CD4-positive, alpha-beta memory T cell (primary cell): ENCODE measurements at regions of chr1 and their contacts with region 1.

Region 1: GRCh38 chr1:9494929-9495758 is 44.1 kb upstream of the SLC25A33 start:
- DNase-seq: peak in 4 of 5 donors; percentile 55 to 62 (median 59)
- H3K4me3 ChIP-seq: peak overlapping the region in 1 of 2 donors; percentile 24
- H3K4me3 Mint-ChIP-seq: peak overlapping the region; percentile 63 to 79 (median 72)
- H3K27ac ChIP-seq: no peak overlapping the region
- H3K27ac Mint-ChIP-seq: no peak overlapping the region
- H3K4me1 ChIP-seq: peaks cover 10% of the 10 kb centered on the region
- H3K4me1 Mint-ChIP-seq: peaks cover 5 to 6% (median 6%) of the 10 kb centered on the region in 4 donors
- H3K27me3 ChIP-seq: no peaks in the 10 kb centered on the region
- H3K27me3 Mint-ChIP-seq: peaks cover 6 to 9% of the 10 kb centered on the region in 2 donors

Region 2: GRCh38 chr1:9110669-9111356 is 384.3 kb before region 1 on chr1:
- CTCF ChIA-PET with region 1: interaction called, 10 read pairs
- POLR2A ChIA-PET with region 1: no interaction called
- intact Hi-C with region 1: no loop called
- DNase-seq: peak; percentile 71 to 77 (median 74)
- H3K4me3 ChIP-seq: no peak overlapping the region
- H3K4me3 Mint-ChIP-seq: no peak overlapping the region
- H3K27ac ChIP-seq: no peak overlapping the region
- H3K27ac Mint-ChIP-seq: no peak overlapping the region
- H3K4me1 ChIP-seq: no peaks in the 10 kb centered on the region
- H3K4me1 Mint-ChIP-seq: peaks cover 0 to 4% (median 0%) of the 10 kb centered on the region in 4 donors
- H3K27me3 ChIP-seq: no peaks in the 10 kb centered on the region
- H3K27me3 Mint-ChIP-seq: no peaks in the 10 kb centered on the region

Region 3: GRCh38 chr1:9181176-9181906 is 313.8 kb before region 1 on chr1:
- CTCF ChIA-PET with region 1: interaction called, 20 read pairs
- POLR2A ChIA-PET with region 1: no interaction called
- intact Hi-C with region 1: no loop called
- DNase-seq: peak; percentile 50 to 65 (median 57)
- H3K4me3 ChIP-seq: peak overlapping the region in 1 of 2 donors; percentile 47
- H3K4me3 Mint-ChIP-seq: peak overlapping the region; percentile 66 to 86 (median 80)
- H3K27ac ChIP-seq: no peak overlapping the region
- H3K27ac Mint-ChIP-seq: no peak overlapping the region
- H3K4me1 ChIP-seq: peaks cover 13% of the 10 kb centered on the region
- H3K4me1 Mint-ChIP-seq: peaks cover 3 to 9% (median 8%) of the 10 kb centered on the region in 4 donors
- H3K27me3 ChIP-seq: peaks cover 17% of the 10 kb centered on the region
- H3K27me3 Mint-ChIP-seq: peaks cover 13 to 15% of the 10 kb centered on the region in 2 donors

Region 4: DNA sequence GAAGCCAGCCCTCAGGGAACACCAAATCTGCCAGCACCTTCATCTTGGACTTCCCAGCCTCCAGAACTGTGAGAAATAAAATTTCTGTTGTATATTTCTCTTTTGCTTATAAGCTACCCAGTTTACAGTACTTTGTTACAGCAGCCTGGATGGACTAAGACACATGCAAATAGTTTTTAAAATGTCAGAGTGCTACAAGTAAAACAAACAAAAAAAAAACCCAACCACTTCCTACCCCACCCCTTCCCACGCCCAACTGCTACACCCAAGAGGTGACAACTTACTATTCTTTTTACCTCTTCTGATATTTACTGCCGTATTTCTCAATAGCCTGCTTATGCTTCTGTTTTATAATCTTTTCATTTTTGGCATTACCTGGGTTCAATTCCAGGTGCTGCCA is 211.1 kb before region 1 on chr1:
- CTCF ChIA-PET with region 1: interaction called, 82 read pairs
- POLR2A ChIA-PET with region 1: interaction called, 3 read pairs
- intact Hi-C with region 1: loop called (anchors 1 kb)
- DNase-seq: peak in 3 of 5 donors; percentile 33 to 61 (median 39)
- H3K4me3 ChIP-seq: peak overlapping the region in 1 of 2 donors; percentile 5
- H3K4me3 Mint-ChIP-seq: peak overlapping the region in 7 of 8 donors; percentile 39 to 81 (median 70)
- H3K27ac ChIP-seq: no peak overlapping the region
- H3K27ac Mint-ChIP-seq: peak overlapping the region in 6 of 7 donors; percentile 52 to 81 (median 72)
- H3K4me1 ChIP-seq: peaks cover 59% of the 10 kb centered on the region
- H3K4me1 Mint-ChIP-seq: peaks cover 25 to 69% (median 43%) of the 10 kb centered on the region in 4 donors
- H3K27me3 ChIP-seq: no peaks in the 10 kb centered on the region
- H3K27me3 Mint-ChIP-seq: no peaks in the 10 kb centered on the region

Region 5: DNA sequence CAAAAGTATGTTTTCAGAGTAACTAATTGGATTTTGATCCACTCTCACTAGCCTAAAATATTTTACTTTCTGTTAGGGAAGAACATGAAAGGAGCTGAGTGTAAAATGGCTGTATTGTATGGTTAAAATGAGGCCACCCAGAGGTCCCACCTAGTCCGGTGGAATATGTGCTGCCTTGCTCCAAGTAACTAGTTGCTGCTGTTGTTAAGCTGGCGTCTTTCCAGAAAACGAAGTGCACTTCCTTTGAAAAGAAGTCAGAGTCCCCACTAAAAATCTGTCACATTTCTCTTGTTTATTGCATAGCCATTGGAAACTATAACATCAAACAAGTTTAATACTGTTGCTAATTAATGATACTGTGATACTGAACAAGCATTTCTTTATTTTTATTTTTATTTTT is 47.3 kb after region 1 on chr1:
- CTCF ChIA-PET with region 1: no interaction called
- POLR2A ChIA-PET with region 1: no interaction called
- intact Hi-C with region 1: no loop called
- DNase-seq: no peak
- H3K4me3 ChIP-seq: no peak overlapping the region
- H3K4me3 Mint-ChIP-seq: peak overlapping the region in 1 of 8 donors; percentile 24
- H3K27ac ChIP-seq: no peak overlapping the region
- H3K27ac Mint-ChIP-seq: peak overlapping the region in 3 of 7 donors; percentile 19 to 73 (median 27)
- H3K4me1 ChIP-seq: peaks cover 19% of the 10 kb centered on the region
- H3K4me1 Mint-ChIP-seq: peaks cover 21 to 47% (median 30%) of the 10 kb centered on the region in 4 donors
- H3K27me3 ChIP-seq: no peaks in the 10 kb centered on the region
- H3K27me3 Mint-ChIP-seq: no peaks in the 10 kb centered on the region

Region 6: GRCh38 chr1:9558271-9558945 is 63.3 kb after region 1 on chr1:
- CTCF ChIA-PET with region 1: interaction called, 9 read pairs
- POLR2A ChIA-PET with region 1: no interaction called
- intact Hi-C with region 1: loop called (anchors 5 kb)
- DNase-seq: no peak
- H3K4me3 ChIP-seq: no peak overlapping the region
- H3K4me3 Mint-ChIP-seq: peak overlapping the region in 7 of 8 donors; percentile 3 to 62 (median 32)
- H3K27ac ChIP-seq: no peak overlapping the region
- H3K27ac Mint-ChIP-seq: peak overlapping the region in 6 of 7 donors; percentile 63 to 86 (median 78)
- H3K4me1 ChIP-seq: peaks cover 25% of the 10 kb centered on the region
- H3K4me1 Mint-ChIP-seq: peaks cover 21 to 36% (median 28%) of the 10 kb centered on the region in 4 donors
- H3K27me3 ChIP-seq: no peaks in the 10 kb centered on the region
- H3K27me3 Mint-ChIP-seq: no peaks in the 10 kb centered on the region

Region 7: GRCh38 chr1:9867408-9868243 is 372.5 kb after region 1 on chr1:
- CTCF ChIA-PET with region 1: interaction called, 3 read pairs
- POLR2A ChIA-PET with region 1: no interaction called
- intact Hi-C with region 1: loop called (anchors 1 kb)
- DNase-seq: peak; percentile 81 to 86 (median 81)
- H3K4me3 ChIP-seq: no peak overlapping the region
- H3K4me3 Mint-ChIP-seq: no peak overlapping the region
- H3K27ac ChIP-seq: no peak overlapping the region
- H3K27ac Mint-ChIP-seq: peak overlapping the region in 1 of 7 donors; percentile 6
- H3K4me1 ChIP-seq: peaks cover 6% of the 10 kb centered on the region
- H3K4me1 Mint-ChIP-seq: peaks cover 0 to 4% (median 0%) of the 10 kb centered on the region in 4 donors
- H3K27me3 ChIP-seq: no peaks in the 10 kb centered on the region
- H3K27me3 Mint-ChIP-seq: no peaks in the 10 kb centered on the region